MCF 10A (cell line): ENCODE measurements at regions of chr17 and their contacts with region 1.

Region 1: GRCh38 chr17:50626037-50626574 is 8.6 kb upstream of the ABCC3 start:
- DNase-seq: peak; percentile 75
- H3K4me3 Mint-ChIP-seq: no peak overlapping the region
- H3K27ac Mint-ChIP-seq: no peak overlapping the region
- H3K4me1 Mint-ChIP-seq: peaks cover 6% of the 10 kb centered on the region
- H3K27me3 Mint-ChIP-seq: no peaks in the 10 kb centered on the region
- CTCF ChIP-seq: peak; percentile 72

Region 2: DNA sequence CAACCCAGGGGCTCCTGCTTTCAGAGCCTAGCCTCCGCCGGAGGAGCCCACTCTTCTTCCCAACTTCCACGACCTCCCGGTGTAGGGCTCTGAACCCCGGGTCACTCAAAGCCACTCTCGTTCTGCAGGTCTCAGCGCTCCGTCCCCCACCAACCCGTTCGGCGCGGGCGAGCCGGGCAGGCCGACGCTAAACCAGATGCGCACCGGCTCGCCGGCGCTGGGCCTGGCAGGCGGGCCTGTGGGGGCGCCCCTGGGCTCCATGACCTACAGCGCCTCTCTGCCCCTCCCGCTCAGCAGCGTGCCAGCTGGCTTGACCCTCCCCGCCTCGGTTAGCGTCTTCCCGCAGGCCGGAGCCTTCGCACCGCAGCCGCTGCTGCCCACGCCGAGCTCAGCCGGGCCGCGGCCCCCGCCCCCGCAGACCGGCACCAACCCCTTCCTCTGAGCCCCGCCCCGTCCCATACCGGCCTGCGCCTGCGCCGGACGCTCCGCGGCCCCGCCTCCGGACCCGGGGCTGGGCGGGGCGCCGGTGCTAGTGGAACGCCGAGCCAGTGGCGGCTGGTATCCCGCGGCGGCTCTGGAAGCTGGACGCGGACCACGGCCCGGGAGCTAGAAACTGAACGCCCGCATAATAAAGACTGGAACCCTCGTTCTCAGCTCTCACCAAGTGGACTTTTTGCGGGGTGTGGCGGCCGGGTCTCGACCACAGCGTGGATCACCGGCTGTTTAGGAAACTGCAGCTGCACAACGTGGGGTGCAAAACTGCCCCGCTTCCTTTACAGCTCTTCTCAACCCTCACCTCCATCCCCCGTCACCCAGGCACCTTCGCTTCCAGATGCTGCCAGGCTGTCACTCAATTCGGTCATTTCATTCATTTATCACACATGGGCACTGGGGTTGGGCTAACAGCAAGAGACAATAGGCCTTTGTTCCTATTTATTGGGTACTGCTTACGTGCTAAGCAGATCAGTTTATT is 84.1 kb before region 1 on chr17:
- CTCF ChIA-PET with region 1: interaction called, 16 read pairs
- POLR2A ChIA-PET with region 1: interaction called, 5 read pairs
- intact Hi-C with region 1: loop called (anchors 1 kb)
- DNase-seq: peak; percentile 85
- H3K4me3 Mint-ChIP-seq: peak overlapping the region; percentile 70
- H3K27ac Mint-ChIP-seq: no peak overlapping the region
- H3K4me1 Mint-ChIP-seq: peaks cover 41% of the 10 kb centered on the region
- H3K27me3 Mint-ChIP-seq: no peaks in the 10 kb centered on the region
- CTCF ChIP-seq: peak; percentile 9

Region 3: DNA sequence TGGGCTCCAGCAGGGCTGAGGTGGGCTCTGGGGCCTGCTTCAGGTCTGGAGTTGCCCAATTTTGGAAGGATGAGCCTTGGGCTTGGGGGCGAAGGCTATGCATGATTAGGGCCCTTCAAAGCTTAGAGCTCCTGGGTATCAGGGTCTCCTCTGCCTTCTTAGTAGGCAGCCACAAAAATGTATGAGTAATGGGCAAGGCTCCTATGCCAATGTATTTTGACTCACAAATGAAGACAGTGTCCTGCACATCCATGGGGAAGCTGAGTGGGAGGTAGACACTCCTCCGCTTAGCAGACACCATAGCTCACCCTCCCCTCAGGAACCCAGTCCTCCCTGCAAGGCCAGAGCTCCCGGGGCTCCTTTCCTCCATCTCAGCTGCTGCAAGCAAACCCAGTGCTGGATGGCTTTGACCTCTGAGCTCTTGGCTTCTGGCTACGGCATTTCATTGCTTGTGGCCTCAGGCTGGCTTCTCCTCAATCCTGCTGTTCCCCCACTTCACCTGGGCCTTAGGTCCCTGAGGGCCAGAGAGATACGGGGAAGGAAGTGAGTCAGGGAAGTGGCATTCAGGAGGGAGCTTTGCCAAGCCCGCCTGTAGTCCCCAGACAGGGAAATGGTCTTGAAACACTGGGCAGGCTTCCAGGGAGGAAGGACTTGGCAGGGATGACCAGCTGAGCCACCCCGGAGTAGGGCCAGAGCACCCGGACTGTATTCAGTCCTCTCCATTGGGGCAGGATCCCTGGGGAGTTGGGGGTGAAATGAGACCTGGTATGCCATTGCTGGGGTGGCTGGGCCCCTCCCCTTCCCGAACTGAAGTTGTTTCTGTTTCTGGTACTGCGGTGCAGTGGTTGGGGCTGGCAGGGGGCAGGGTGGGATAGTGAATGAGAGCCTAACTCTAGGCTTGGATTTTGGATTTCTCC is 13.0 kb after region 1 on chr17:
- CTCF ChIA-PET with region 1: interaction called, 14 read pairs
- POLR2A ChIA-PET with region 1: interaction called, 4 read pairs
- intact Hi-C with region 1: no loop called
- DNase-seq: peak; percentile 100
- H3K4me3 Mint-ChIP-seq: peak overlapping the region; percentile 71
- H3K27ac Mint-ChIP-seq: peak overlapping the region; percentile 81
- H3K4me1 Mint-ChIP-seq: peaks cover 54% of the 10 kb centered on the region
- H3K27me3 Mint-ChIP-seq: no peaks in the 10 kb centered on the region
- CTCF ChIP-seq: no peak

Region 4: GRCh38 chr17:50661795-50662391 is 35.8 kb after region 1 on chr17:
- CTCF ChIA-PET with region 1: interaction called, 13 read pairs
- POLR2A ChIA-PET with region 1: interaction called, 6 read pairs
- intact Hi-C with region 1: no loop called
- DNase-seq: peak; percentile 99
- H3K4me3 Mint-ChIP-seq: peak overlapping the region; percentile 47
- H3K27ac Mint-ChIP-seq: peak overlapping the region; percentile 77
- H3K4me1 Mint-ChIP-seq: peaks cover 45% of the 10 kb centered on the region
- H3K27me3 Mint-ChIP-seq: no peaks in the 10 kb centered on the region
- CTCF ChIP-seq: no peak

Region 5: DNA sequence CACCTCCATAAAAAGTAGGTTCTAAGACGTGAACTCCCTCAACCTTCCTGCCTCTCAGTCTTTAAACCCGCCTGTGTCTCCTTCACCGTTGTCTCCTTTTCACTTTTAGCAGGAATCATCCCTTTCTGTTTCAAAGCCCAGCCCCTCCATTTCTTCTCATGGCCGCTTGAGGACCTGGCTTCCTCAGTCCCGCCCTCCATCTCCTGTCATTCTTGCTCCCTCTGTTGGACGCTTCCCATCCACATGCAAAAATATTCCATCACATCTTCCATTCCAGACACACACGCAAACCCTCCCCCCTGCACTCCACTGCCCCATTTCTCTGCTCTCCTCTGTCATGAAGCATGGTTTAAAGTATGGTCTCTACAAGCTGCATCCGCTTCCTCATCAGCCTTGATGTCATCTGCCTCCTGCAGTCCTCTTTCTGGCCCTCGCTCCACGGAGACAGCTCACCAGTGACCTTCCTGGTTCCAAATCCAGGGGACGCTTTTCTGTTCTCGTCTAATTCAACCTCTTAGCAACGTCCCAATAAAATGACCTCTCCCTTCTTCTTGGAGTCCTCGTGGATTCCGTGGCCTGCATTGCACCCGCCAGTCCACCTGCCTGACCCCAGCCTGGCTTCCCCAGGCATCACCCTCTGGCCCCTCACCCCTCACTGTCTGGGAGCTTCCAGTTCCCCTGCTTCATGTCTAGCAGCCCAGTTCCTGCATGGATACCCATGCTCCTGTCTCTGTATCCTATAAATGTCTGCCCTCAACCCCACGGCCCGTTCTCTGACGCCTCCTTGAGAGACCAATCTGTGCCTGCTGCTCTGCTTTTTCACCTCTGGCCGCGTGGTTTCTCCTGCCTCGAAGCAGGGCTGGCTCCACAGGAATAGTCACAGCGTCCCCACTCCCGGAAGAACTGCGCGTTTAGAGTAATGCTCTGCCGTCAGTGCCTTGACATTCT is 55.4 kb after region 1 on chr17:
- CTCF ChIA-PET with region 1: interaction called, 118 read pairs
- POLR2A ChIA-PET with region 1: interaction called, 6 read pairs
- intact Hi-C with region 1: loop called (anchors 1 kb)
- DNase-seq: peak; percentile 67
- H3K4me3 Mint-ChIP-seq: no peak overlapping the region
- H3K27ac Mint-ChIP-seq: peak overlapping the region; percentile 32
- H3K4me1 Mint-ChIP-seq: peaks cover 26% of the 10 kb centered on the region
- H3K27me3 Mint-ChIP-seq: no peaks in the 10 kb centered on the region
- CTCF ChIP-seq: peak; percentile 35

Region 6: DNA sequence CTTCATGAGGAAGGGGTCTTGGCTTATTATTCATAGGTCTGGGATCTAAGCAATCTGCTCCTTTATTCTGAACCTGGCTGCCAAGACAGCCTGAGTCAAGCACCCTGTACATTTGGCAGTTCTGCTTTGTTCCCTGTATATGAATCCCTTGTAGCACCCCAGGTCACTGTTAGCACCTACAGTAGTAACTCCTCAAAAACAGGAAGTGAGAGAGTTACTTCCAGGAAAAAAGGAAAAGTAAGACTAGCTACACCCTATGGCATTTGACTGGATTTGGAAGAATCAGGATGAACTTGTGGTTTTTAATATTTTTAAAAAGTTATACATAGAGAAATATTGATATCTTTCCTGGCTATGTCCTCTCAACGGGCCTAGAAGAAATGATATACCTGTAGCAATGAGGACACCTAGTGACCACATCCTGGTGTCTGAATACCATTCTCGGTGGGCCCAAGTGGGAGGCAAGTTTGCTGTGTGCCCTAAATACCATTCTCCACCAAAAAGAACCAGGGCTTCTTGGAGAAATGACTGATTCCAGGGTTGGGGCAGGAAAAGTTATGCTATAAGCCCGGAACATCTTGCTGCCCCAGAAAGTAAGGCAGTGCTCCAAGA is 71.7 kb after region 1 on chr17:
- CTCF ChIA-PET with region 1: interaction called, 248 read pairs
- POLR2A ChIA-PET with region 1: interaction called, 11 read pairs
- intact Hi-C with region 1: loop called (anchors 1 kb)
- DNase-seq: no peak
- H3K4me3 Mint-ChIP-seq: no peak overlapping the region
- H3K27ac Mint-ChIP-seq: peak overlapping the region; percentile 91
- H3K4me1 Mint-ChIP-seq: peaks cover 28% of the 10 kb centered on the region
- H3K27me3 Mint-ChIP-seq: no peaks in the 10 kb centered on the region
- CTCF ChIP-seq: no peak